GM10248 (cell line): ENCODE measurements at regions of chr14 and their contacts with region 1.

Region 1: DNA sequence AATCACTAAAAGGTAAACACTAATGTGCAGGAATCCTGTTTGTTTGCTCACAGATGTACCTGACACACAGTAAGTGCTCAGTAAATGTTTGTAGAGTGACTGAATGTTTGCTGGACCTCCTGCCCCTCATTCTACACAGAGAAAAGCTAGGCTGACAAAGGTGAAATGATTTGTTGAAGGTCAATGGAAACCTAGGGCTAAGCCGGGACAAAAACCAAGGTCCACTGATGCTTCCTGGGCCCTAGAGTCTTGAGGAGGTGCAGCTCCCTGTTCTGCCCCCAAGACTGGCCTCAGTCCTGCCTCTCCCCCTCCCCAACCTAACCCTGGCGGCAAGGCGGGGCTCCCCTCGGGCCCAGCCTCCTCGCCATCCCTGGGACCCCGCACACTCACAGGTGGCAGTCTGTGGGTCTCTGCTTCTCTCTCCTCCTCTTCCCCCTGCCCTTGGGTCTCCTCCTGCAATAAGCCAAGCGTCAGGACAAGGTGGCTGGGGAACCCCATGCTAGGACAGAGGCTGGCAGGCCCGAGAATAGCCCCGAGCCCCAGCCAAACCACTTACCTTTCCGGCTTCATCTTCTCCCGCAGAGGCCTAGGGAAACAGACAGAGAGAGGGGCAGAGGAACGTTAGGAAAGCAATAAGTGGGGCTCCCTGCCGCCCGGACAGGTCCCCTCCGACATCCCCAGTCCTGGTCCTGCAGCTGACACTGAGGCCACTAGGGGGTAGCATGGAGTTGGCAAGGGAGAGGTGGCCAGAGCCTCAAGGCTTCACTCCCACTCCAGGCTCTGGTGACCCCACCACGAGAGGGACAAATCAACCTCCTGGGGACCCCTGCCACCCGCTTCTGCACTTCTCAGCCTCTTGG is 9.3 kb downstream of the PGF start:
- DNase-seq: peak; percentile 91
- CTCF ChIP-seq: peak; percentile 98

Region 2: GRCh38 chr14:74886001-74886400 is 60.1 kb before region 1 on chr14:
- CTCF ChIA-PET with region 1: no interaction called
- POLR2A ChIA-PET with region 1: no interaction called
- DNase-seq: no peak
- CTCF ChIP-seq: no peak

Region 3: DNA sequence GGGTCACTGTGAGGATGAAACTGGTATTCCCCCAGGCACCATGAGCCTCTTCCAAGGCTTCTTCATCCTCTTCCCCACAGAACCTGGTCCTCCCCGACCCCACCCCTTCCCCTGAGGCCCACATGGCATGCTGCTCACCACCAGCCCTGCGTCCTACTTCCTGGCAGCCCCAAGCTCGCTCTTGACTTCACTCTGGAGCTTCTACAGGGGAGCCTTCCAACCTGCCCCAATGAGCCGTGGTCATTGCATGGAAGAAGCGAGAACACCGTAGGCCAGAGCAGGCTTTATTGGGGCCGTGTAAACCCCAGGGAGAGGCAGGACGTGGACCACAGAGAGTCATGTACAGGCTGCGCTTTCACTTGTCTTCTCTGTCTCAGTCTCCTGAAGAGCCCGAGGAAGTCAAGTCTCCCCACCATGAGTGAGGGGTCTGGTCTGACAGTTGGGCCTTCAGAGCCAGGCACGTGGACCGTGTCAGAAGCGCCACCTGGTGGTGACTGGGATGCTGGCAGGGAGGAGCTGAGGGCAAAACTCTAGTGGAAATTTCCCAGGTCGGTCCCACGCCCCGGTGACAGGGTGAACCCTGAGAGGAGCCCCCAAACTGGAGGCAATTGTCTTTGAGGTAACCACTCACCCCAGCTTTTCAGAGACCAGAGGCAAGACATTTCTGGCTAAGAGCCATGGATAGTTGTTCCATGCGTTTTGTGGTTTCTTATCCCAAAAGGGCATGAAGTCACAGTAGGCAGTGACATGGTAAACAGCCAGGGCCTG is 40.5 kb before region 1 on chr14:
- CTCF ChIA-PET with region 1: interaction called, 40 read pairs
- POLR2A ChIA-PET with region 1: no interaction called
- DNase-seq: peak; percentile 82
- CTCF ChIP-seq: peak; percentile 88

Region 4: DNA sequence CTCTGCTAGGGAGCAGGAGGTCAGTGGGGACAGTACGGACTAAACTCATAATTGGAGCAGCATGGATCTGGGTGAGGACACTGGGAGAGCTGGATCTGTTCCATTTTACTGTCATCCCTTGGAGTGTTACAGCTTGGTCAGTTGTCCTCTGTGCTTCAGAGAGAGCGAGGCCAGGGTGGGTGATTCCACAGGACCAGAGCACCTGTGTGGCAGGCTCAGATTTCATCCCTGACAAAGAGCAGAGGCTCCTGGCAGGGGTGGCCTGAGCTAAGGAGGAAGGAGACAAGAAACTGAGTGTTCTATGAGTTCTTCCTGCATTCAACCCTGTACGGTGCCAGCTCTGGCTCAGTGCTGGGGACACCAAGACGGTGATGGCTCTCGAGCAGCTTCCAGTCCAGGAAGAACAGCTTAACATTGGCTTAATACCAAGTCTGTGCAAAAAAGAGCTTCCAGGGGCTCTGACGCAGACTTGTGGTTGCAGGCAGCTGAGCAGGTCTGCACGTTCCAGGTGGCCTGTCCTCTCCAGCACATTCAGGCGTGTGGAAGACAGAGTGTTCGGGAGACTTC is 17.7 kb after region 1 on chr14:
- CTCF ChIA-PET with region 1: interaction called, 93 read pairs
- POLR2A ChIA-PET with region 1: no interaction called
- DNase-seq: no peak
- CTCF ChIP-seq: no peak

Region 5: GRCh38 chr14:74979442-74980361 is 33.6 kb after region 1 on chr14:
- CTCF ChIA-PET with region 1: interaction called, 16 read pairs
- POLR2A ChIA-PET with region 1: interaction called, 3 read pairs
- DNase-seq: no peak
- CTCF ChIP-seq: no peak